AG04449 (cell line): ENCODE measurements at regions of chr11 and their contacts with region 1.

Region 1: DNA sequence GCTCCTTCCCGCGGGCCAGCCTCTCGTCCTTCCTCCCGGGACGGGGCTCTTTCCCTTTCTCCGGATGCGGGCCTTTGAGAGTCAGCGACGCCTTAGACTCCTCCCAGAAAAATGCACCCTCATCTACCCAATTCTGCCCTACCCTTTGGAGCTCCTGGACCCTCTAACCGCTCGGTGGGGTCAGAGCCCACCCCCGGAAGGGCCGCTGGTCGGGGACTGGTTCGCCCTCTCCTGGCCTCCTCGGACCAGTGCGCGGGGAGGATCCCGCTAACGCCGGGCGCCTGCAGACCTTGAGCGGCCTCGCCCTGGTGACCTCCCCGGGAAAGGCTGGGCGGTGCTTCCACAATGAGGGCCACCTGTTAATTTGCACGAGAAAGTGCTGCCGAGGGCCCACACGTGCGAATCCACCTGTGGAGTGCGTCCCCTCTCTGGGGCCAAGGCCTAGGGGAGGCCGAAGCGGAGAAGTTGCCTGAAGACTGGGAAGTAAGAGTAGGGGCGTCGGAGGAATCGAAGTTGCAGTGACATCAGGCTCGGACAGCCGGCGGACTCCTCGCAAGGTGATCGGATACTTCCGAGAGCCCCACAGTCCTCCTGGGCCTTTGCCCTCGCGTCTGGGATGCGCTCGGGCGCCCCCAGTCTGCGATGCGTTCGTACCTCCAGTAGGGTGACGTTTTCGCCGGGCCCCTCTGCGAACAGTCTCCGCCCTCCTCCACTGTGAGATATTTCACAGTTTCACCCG is 61.5 kb downstream of the ENDOD1 start:
- DNase-seq: no peak
- H3K4me3 ChIP-seq: peak overlapping the region; percentile 58
- CTCF ChIP-seq: peak; percentile 85

Region 2: GRCh38 chr11:95089620-95090542 is 61.2 kb before region 1 on chr11 and contains the start of gene ENDOD1:
- CTCF ChIA-PET with region 1: interaction called, 15 read pairs
- POLR2A ChIA-PET with region 1: no interaction called
- DNase-seq: no peak
- H3K4me3 ChIP-seq: peak within 1 kb of the TSS; percentile 71
- CTCF ChIP-seq: no peak

Region 3: DNA sequence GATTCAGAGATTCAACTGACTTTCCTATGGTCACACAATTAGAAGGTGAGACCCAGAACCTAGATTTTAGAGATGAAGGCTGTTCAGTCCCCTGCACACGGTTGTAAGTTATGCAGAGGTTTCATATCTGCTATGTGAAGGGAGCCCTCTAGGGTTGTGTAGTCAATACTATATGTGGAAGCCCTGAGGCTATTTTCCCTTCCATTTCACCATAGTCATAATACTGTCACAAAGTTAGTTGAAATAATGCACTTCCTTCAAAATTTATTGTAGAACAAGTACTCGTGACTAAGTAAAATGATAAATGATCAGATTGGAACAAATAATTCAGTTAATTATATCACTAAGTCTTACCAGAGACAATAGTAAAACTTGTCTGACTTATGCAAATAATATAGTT is 12.7 kb before region 1 on chr11:
- CTCF ChIA-PET with region 1: interaction called, 26 read pairs
- POLR2A ChIA-PET with region 1: interaction called, 4 read pairs
- DNase-seq: no peak
- H3K4me3 ChIP-seq: no peak overlapping the region
- CTCF ChIP-seq: no peak

Region 4: DNA sequence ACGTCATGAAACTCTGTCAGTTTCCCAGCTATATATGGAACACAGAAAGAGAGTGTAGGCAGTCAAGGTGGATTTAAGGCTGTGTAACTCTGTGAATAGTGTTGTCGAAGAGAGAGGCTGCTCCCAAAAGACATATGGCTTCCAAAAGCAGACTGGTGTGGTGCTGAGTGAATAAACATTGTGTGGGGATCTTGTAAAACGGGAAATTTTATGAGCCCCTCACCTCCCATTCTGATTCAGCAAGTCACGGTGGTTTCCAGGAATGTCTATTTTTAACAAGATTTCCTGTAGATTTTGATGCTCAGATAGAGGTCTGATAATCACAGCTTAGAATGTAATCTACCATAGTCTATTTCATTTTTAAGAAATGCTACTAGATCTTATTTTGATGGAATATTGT is 12.0 kb after region 1 on chr11:
- CTCF ChIA-PET with region 1: interaction called, 11 read pairs
- POLR2A ChIA-PET with region 1: no interaction called
- DNase-seq: no peak
- H3K4me3 ChIP-seq: no peak overlapping the region
- CTCF ChIP-seq: no peak

Region 5: DNA sequence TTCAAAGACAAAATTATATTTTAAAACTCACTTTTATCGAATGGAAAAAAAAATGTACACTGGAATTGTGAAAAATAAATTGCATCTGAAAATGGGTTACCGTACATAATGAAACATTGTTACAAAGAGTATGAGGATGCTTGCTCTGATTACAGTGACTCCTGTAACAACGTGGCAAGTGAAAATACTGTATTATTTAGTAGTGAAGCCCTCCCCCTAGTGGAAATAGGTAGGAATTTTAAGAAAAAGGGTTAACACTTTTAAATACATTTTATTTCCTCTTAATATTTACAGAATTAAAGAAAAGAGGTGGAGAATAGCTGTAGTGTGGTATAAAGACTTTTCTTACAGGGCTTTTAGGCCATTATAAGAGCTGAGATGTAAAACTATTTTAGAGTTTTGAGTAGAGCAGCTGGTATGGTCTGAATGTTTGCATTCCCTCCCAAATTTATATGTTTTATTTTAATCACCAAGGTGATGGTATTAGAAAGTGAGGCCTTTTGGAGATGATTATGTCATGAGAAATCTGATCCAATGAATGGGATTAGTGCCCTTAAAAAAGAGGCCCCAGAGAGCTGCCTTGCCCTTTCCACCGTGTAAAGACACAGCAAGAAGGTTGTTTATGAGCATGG is 613.3 kb after region 1 on chr11:
- CTCF ChIA-PET with region 1: interaction called, 581 read pairs
- POLR2A ChIA-PET with region 1: no interaction called
- DNase-seq: no peak
- H3K4me3 ChIP-seq: no peak overlapping the region
- CTCF ChIP-seq: peak; percentile 31

Region 6: DNA sequence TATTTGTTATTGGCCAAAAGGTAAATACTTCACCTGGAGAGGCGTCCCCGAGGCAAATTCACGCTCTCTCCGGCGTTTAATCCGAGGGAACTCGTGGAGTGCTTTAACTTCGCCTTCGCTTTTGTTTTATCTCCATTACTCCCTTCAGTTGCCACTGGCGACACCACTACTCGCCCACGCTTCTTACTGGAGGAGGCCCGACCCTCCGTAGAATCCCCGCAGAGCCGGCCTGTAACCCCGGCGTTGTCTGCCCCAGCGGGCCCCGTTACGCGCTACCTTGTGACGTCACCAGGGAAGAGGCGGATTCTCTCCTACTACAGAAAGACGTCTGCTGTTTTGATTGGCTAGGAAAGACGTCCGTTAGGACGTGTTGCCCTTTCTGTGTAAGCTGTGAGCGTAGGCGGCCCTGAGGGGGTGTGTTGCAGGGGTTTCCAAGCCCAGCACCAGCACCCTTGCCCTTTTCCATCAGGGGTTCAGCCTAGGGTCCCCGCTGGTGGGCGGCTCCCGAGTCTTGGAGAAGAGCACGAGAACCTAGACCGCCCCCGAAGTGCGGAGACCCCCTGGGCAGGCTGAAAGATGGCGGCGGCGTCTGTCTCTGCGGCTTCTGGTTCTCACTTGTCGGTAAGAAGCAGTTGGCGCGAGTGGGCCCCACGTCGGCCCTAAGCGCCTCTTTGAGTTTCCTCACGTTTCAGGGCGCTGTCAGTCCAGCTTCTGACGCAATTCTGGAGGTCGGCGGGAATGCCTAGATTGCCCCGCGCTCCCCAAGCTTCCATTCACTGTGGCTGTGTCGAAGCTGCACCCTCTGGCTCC is 639.2 kb after region 1 on chr11 and contains the start of gene CEP57:
- CTCF ChIA-PET with region 1: interaction called, 19 read pairs
- POLR2A ChIA-PET with region 1: interaction called, 3 read pairs
- DNase-seq: peak; percentile 94
- H3K4me3 ChIP-seq: peak within 1 kb of the TSS; percentile 85
- CTCF ChIP-seq: no peak